ENCODE measurements at regions of chr13 and their contacts with region 1.

Region 1: GRCh38 chr13:94435604-94436226 is 43.8 kb downstream of the DCT start:
- DNase-seq: peak in 2 of 3 donors; percentile 6 to 36
- H3K4me3 ChIP-seq: no peak overlapping the region
- H3K4me3 Mint-ChIP-seq: no peak overlapping the region
- H3K27ac ChIP-seq: no peak overlapping the region
- H3K27ac Mint-ChIP-seq: no peak overlapping the region
- H3K4me1 ChIP-seq: no peaks in the 10 kb centered on the region
- H3K4me1 Mint-ChIP-seq: peaks cover 6% of the 10 kb centered on the region
- H3K27me3 ChIP-seq: peaks cover 0 to 2% of the 10 kb centered on the region in 2 donors
- H3K27me3 Mint-ChIP-seq: peaks cover 4 to 11% (median 6%) of the 10 kb centered on the region in 3 donors
- CTCF ChIP-seq: peak; percentile 56

Region 2: GRCh38 chr13:94362411-94362909 is 73.3 kb before region 1 on chr13:
- intact Hi-C with region 1: no loop called
- DNase-seq: peak; percentile 49 to 66 (median 54)
- H3K4me3 ChIP-seq: no peak overlapping the region
- H3K4me3 Mint-ChIP-seq: no peak overlapping the region
- H3K27ac ChIP-seq: no peak overlapping the region
- H3K27ac Mint-ChIP-seq: peak overlapping the region in 1 of 7 donors; percentile 35
- H3K4me1 ChIP-seq: no peaks in the 10 kb centered on the region
- H3K4me1 Mint-ChIP-seq: no peaks in the 10 kb centered on the region
- H3K27me3 ChIP-seq: no peaks in the 10 kb centered on the region
- H3K27me3 Mint-ChIP-seq: peaks cover 0 to 3% (median 3%) of the 10 kb centered on the region in 3 donors
- CTCF ChIP-seq: peak; percentile 85

Region 3: DNA sequence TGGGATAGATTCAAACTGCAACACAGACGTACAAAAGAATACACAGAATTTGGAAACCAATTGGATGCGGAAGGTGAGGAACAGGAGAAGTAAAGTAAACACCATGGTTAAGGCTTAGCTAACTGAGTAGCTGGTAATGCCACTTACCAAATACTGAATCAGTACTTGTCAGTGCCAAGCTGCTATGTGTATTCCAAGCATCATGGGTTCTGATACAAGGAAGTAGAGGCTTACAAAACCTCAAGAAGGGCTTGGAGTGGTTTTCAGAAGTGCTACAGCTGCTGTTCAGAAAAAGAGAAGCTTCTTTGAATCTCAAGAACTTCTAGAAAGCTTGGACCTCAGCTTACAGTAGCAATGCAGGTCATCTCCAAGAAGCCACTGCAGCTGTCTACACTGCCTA is 79.7 kb after region 1 on chr13:
- intact Hi-C with region 1: no loop called
- DNase-seq: peak in 2 of 3 donors; percentile 3 to 17
- H3K4me3 ChIP-seq: no peak overlapping the region
- H3K4me3 Mint-ChIP-seq: no peak overlapping the region
- H3K27ac ChIP-seq: no peak overlapping the region
- H3K27ac Mint-ChIP-seq: peak overlapping the region in 1 of 7 donors; percentile 20
- H3K4me1 ChIP-seq: peaks cover 22 to 28% of the 10 kb centered on the region in 2 donors
- H3K4me1 Mint-ChIP-seq: peaks cover 34% of the 10 kb centered on the region
- H3K27me3 ChIP-seq: no peaks in the 10 kb centered on the region
- H3K27me3 Mint-ChIP-seq: peaks cover 0 to 4% (median 2%) of the 10 kb centered on the region in 3 donors
- CTCF ChIP-seq: no peak

Region 4: GRCh38 chr13:94601446-94602431 is 166.0 kb after region 1 on chr13 and contains the start of gene GPR180:
- intact Hi-C with region 1: no loop called
- DNase-seq: peak; percentile 90 to 94 (median 94)
- H3K4me3 ChIP-seq: peak within 1 kb of the TSS; percentile 61 to 89 (median 65)
- H3K4me3 Mint-ChIP-seq: peak within 1 kb of the TSS; percentile 80 to 89
- H3K27ac ChIP-seq: peak within 1 kb of the TSS in 1 of 2 donors; percentile 49
- H3K27ac Mint-ChIP-seq: peak within 1 kb of the TSS in 3 of 7 donors; percentile 18 to 70 (median 42)
- H3K4me1 ChIP-seq: peaks cover 11 to 23% of the 10 kb centered on the region in 2 donors
- H3K4me1 Mint-ChIP-seq: peaks cover 9% of the 10 kb centered on the region
- H3K27me3 ChIP-seq: no peaks in the 10 kb centered on the region
- H3K27me3 Mint-ChIP-seq: peaks cover 0 to 5% (median 3%) of the 10 kb centered on the region in 3 donors
- CTCF ChIP-seq: no peak
- polyA plus RNA-seq, gene GPR180: 1.0 to 1.1 (median 1.0) TPM

Region 5: DNA sequence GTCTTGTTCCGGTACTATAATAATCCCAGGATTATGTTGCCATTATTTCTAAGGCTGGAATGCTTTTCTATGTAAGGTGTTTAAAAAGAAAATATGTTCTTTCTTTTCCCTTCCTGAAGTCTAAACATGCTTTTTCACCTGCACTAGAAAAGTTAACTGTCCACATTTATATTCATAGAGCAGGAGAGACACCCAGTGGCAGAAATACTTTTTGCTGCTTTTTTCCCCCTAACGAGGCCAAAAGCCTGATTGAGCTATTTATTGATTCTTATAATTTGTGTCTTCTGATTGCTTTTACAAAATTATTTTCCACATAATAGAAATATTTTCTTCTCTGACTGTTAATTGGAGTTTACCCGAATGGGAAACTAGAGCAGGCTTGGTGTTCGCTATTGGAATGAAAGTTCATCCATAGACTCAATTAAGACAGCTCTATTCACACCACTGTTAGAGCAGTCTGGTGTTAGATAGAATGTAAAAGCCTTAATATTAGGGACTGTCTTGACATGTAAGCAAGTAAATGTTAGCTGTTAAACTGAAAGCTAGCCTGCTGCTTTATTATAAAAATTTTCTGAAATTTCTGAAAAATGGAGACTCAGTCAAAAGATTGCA is 181.8 kb after region 1 on chr13:
- intact Hi-C with region 1: loop called (anchors 5 kb)
- DNase-seq: peak in 1 of 3 donors; percentile 30
- H3K4me3 ChIP-seq: no peak overlapping the region
- H3K4me3 Mint-ChIP-seq: no peak overlapping the region
- H3K27ac ChIP-seq: no peak overlapping the region
- H3K27ac Mint-ChIP-seq: no peak overlapping the region
- H3K4me1 ChIP-seq: no peaks in the 10 kb centered on the region
- H3K4me1 Mint-ChIP-seq: peaks cover 6% of the 10 kb centered on the region
- H3K27me3 ChIP-seq: no peaks in the 10 kb centered on the region
- H3K27me3 Mint-ChIP-seq: no peaks in the 10 kb centered on the region
- CTCF ChIP-seq: peak; percentile 61

Region 6: DNA sequence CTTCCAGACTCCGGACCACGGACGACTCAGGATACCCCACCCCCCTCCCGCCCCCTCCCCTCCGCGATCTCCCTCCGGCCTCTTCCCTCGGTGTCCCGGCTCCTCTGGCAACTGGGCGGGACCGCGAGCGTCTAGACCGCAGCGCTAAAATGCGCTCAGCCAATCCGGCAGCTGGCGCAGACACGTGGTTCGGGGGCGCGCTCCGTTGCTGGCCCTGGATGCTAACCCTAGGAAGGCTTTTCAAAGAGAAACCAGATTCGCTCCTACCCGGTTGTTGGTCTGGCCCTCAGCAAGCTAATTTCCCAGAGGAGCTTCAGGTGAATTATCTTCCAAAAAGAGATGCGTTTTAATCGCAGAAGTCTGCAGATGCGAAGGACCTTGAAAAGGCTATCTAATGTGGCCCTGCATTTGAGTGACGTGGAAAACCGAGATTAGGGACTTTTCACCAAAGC is 1208.9 kb after region 1 on chr13 and contains the start of gene DZIP1:
- intact Hi-C with region 1: no loop called
- DNase-seq: no peak
- H3K4me3 ChIP-seq: peak within 1 kb of the TSS; percentile 23 to 71 (median 27)
- H3K4me3 Mint-ChIP-seq: peak within 1 kb of the TSS; percentile 78 to 88
- H3K27ac ChIP-seq: no peak within 1 kb of the TSS
- H3K27ac Mint-ChIP-seq: no peak within 1 kb of the TSS
- H3K4me1 ChIP-seq: peaks cover 19 to 24% of the 10 kb centered on the region in 2 donors
- H3K4me1 Mint-ChIP-seq: peaks cover 20% of the 10 kb centered on the region
- H3K27me3 ChIP-seq: peaks cover 36 to 61% of the 10 kb centered on the region in 2 donors
- H3K27me3 Mint-ChIP-seq: peaks cover 52 to 62% (median 56%) of the 10 kb centered on the region in 3 donors
- CTCF ChIP-seq: no peak
- polyA plus RNA-seq, gene DZIP1: not detected

Measured in CD14-positive monocyte (primary cell).